Activated CD4-positive, alpha-beta memory T cell treated with anti-CD3 and anti-CD28 coated beads for 36 hours (primary cell): ENCODE measurements at regions of chr7 and their contacts with region 1.

Region 1: DNA sequence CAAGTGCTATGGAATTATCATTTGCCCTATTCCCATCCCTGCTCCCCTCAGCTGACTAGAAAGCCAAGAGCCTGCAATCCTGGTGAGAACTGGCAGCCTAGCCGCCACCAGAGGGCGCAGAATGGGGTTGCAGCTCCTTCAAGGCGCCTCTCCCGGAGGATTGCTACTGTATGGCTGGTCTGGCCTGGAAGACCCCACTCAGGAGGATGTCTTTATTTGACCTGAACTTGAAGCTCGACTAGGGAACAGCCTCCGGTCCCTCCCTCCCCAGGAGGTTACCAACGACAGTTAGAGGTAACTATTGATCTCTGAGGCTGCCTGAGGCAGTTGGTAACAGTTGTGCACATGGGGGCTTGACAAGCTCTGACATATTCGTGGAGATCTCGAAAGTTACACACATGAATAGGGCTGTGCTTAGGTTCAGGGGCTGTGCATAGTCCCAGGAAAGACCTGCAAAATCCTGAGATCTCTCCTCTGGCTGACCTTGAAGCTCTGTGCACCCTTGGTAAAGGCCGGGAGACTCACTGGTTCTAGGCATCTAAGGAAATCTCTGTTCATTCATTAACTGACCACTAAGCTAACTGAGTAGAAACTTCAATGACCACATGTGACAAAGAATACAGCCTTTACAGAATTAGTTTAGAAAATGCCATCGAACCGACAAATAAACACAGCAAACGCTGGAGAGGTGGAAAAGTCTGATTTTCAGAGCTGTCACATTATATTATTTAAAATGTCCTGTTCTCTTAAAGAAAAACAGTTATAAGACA is 65.7 kb downstream of the TSPAN12 start:
- DNase-seq: peak; percentile 71
- H3K4me3 Mint-ChIP-seq: no peak overlapping the region
- H3K27ac Mint-ChIP-seq: no peak overlapping the region
- H3K4me1 Mint-ChIP-seq: no peaks in the 10 kb centered on the region
- H3K27me3 Mint-ChIP-seq: no peaks in the 10 kb centered on the region

Region 2: DNA sequence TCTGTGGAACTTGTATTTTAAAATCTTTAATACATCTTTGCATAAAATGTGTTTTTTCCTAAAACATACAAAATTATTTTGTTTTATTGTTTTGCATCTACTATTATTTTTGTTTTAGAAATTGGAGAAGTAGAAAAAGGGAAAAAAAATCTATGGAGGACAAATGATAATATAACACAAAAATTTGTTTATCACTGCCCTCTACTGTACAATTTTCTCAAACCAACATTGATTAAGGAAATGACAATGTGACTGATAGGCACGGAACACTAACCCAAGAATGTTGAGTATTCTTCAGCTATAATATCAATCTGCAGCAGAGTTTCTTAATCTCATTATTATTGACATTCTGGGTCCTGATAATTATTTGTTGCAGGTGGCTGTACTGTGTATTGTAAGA is 148.8 kb after region 1 on chr7:
- CTCF ChIA-PET with region 1: interaction called, 10 read pairs
- POLR2A ChIA-PET with region 1: no interaction called
- intact Hi-C with region 1: loop called (anchors 1 kb)
- DNase-seq: no peak
- H3K4me3 Mint-ChIP-seq: no peak overlapping the region
- H3K27ac Mint-ChIP-seq: no peak overlapping the region
- H3K4me1 Mint-ChIP-seq: no peaks in the 10 kb centered on the region
- H3K27me3 Mint-ChIP-seq: no peaks in the 10 kb centered on the region

Region 3: GRCh38 chr7:120961638-120962173 is 169.4 kb after region 1 on chr7:
- CTCF ChIA-PET with region 1: no interaction called
- POLR2A ChIA-PET with region 1: no interaction called
- intact Hi-C with region 1: no loop called
- DNase-seq: no peak
- H3K4me3 Mint-ChIP-seq: no peak overlapping the region
- H3K27ac Mint-ChIP-seq: no peak overlapping the region
- H3K4me1 Mint-ChIP-seq: peaks cover 20% of the 10 kb centered on the region
- H3K27me3 Mint-ChIP-seq: no peaks in the 10 kb centered on the region

Region 4: DNA sequence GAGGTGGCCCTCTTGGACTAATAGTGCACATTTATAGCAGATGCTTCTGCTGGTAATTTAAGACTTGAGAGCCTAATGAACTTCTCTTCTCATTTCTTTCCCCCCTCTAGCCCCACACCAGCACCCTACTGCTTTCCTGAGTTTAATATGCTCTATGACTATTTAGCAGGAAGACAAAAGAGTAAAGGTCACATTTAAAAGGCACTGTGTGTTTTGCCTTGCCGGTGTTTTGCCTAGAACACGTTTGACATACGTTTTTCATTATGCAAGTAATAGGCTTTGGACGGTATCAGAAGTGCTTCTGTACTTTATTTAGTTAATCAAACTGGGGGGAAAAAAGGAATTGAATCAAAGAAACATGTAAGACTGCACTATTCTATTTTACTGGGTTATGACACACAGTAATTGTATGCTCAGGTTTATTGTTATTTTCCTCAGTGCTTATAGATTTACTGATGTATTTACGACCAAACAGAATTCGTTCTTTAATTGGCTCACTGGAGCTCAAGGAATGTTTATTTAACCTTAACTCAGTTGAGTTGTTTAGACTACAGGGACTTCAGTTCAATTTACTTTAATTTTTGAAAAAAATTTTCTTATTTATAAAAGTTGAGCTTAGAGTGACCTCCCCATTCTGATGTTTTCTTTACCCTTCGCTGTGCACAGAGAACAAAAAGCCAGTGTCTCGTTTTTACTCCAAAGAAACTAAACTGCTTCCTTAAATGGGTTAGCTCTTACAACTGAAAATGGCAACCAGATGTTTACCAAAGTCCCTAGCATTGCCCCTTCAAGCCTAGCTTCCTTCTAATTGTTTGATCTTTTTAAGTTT is 231.6 kb after region 1 on chr7:
- CTCF ChIA-PET with region 1: no interaction called
- POLR2A ChIA-PET with region 1: no interaction called
- intact Hi-C with region 1: no loop called
- DNase-seq: no peak
- H3K4me3 Mint-ChIP-seq: no peak overlapping the region
- H3K27ac Mint-ChIP-seq: no peak overlapping the region
- H3K4me1 Mint-ChIP-seq: no peaks in the 10 kb centered on the region
- H3K27me3 Mint-ChIP-seq: peaks cover 9% of the 10 kb centered on the region

Region 5: DNA sequence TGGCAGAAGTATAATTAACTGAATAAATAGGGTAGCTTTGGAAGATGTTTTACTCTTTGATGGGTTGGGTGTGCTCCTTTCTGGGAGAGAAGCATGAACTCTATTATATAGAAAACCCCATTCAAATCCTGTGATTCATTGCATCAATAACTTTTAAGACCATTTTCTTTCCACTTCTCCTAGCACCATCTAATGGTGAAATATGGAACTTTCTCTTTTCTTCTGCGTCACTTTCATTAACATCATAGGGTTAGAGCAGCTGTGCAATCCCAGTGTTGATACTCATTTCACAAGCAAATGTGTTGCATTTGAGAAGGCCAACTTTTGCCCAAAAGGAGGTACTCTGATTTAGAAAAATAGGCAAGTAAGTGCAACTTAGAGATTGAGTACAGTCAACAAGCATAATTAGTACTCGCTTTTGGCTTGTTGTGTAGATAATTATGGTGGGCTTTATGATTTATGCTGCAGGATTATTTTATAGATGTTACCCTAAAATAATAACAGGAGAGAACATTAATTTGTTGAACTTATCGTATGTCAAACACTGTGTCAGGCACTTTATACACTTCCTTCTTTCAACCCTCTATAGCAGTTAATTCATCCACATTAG is 289.2 kb after region 1 on chr7:
- CTCF ChIA-PET with region 1: interaction called, 13 read pairs
- POLR2A ChIA-PET with region 1: no interaction called
- intact Hi-C with region 1: loop called (anchors 1 kb)
- DNase-seq: no peak
- H3K4me3 Mint-ChIP-seq: no peak overlapping the region
- H3K27ac Mint-ChIP-seq: no peak overlapping the region
- H3K4me1 Mint-ChIP-seq: no peaks in the 10 kb centered on the region
- H3K27me3 Mint-ChIP-seq: peaks cover 28% of the 10 kb centered on the region

Region 6: GRCh38 chr7:121107923-121108498 is 315.7 kb after region 1 on chr7:
- CTCF ChIA-PET with region 1: interaction called, 46 read pairs
- POLR2A ChIA-PET with region 1: no interaction called
- intact Hi-C with region 1: loop called (anchors 2 kb)
- DNase-seq: no peak
- H3K4me3 Mint-ChIP-seq: no peak overlapping the region
- H3K27ac Mint-ChIP-seq: no peak overlapping the region
- H3K4me1 Mint-ChIP-seq: no peaks in the 10 kb centered on the region
- H3K27me3 Mint-ChIP-seq: peaks cover 6% of the 10 kb centered on the region

Region 7: DNA sequence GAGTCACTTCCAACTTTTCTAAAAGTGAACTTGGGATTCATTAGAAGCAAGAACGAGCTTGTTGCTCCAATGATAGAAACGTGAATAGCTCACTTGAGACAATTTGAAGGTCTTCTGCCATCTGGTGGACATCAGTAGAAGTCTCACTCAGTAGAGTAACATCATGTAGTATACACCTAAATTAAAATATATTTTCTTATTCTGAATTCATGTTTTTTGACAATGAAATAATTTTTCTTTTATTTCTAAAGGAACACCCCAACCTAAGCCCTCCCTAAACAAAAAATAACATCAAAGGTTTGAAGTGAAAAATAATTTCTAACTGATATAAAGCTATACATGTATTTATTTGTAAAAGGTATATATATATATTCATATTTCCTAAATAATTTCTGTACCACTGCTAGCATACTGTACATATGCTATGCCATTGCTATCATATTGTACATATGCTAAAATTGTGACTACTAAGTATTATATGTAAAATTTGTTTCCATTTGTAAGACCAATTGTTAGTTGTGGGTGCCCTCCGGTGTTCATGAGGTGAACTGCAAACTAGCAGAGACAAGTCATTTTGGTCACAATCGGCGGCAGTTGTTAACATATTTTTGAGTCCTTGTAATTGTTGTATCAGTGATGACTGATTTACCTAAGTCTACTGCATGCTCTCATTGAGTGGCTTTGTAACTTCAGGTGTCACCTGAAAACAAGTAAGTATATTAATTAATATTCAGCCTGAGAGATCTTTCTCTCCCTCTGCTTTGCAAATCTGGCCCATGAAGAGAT is 1202.5 kb after region 1 on chr7:
- CTCF ChIA-PET with region 1: interaction called, 7 read pairs
- POLR2A ChIA-PET with region 1: no interaction called
- intact Hi-C with region 1: loop called (anchors 10 kb)
- DNase-seq: peak; percentile 54
- H3K4me3 Mint-ChIP-seq: no peak overlapping the region
- H3K27ac Mint-ChIP-seq: no peak overlapping the region
- H3K4me1 Mint-ChIP-seq: no peaks in the 10 kb centered on the region
- H3K27me3 Mint-ChIP-seq: no peaks in the 10 kb centered on the region